A549 (cell line): ENCODE measurements at regions of chr21 and their contacts with region 1.

Region 1: DNA sequence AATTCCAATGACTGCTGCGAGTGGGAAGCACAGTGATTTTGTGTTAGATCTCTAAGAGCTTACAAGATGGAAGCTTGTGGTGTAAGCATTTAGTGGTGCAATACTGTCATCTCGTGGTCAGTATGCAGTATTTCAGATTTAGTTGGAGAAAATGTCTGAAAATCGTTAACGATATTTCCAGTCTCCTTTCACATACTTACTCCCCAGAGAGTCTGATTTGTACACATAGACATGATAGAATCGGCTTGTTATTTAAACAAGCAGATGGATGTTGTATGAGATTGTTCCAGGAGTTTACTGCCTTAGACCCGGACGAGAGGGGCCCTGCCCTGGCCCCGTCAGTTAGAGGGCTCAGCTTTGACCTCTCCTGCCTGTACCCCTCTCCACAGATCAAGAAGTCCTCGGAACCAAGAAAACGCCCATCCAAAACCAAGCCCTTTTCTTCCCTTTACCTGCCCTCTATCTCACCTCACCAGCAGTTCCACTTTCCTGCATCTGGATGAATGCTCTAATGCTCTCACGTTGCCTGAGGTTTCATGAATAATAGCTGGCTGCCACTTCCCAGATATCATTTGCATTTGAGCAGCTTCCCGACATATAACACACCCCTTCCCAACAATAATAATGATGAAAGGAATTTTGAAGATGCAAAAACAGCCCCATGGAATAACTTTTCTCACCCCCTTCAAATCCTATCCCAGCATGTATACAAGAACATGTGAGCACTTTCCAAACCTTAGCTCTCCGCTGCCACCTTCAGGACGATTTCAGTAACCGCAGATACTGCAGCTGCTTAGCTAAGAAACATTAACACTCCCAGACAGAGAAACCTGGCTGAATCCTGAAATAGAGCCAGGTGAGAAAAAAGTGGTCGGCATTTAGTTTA is 247.3 kb downstream of the LTN1 start:
- DNase-seq: peak; percentile 10 to 81
- ATAC-seq: peak; percentile 95 to 97
- H3K4me3 ChIP-seq: peak overlapping the region; percentile 33; the same call in 2 of the 3 replicates
- H3K27ac ChIP-seq: 0 out of 6 replicates have a peak overlapping the region, but pooled peaks of 1 of the 2 experiments have one; percentile 37
- H3K4me1 ChIP-seq: no peaks in the 10 kb centered on the region
- CTCF ChIP-seq: peak; percentile 74
- EP300 ChIP-seq: no peak
- POLR2A ChIP-seq: no peak
- RAD21 ChIP-seq: peak; percentile 81 to 88

Region 2: GRCh38 chr21:26845066-26845758 is 1900.2 kb before region 1 on chr21 and contains the start of gene ADAMTS1:
- CTCF ChIA-PET with region 1: interaction called, 17 read pairs
- POLR2A ChIA-PET with region 1: interaction called, 3 read pairs
- DNase-seq: peak in 1 of 2 experiments; percentile 38
- ATAC-seq: peak; percentile 54 to 72
- H3K4me3 ChIP-seq: peak within 1 kb of the TSS; percentile 42
- H3K27ac ChIP-seq: 0 out of 6 replicates have a peak within 1 kb of the TSS, but pooled peaks of 1 of the 2 experiments have one; percentile 49
- H3K4me1 ChIP-seq: peaks cover 9% of the 10 kb centered on the region; the same call in 2 of the 3 replicates
- CTCF ChIP-seq: no peak
- EP300 ChIP-seq: no peak
- POLR2A ChIP-seq: no peak
- RAD21 ChIP-seq: no peak
- polyA plus RNA-seq, gene ADAMTS1: 0.17 and 0.24 TPM in 2 replicates

Region 3: GRCh38 chr21:28336314-28336713 is 409.1 kb before region 1 on chr21:
- CTCF ChIA-PET with region 1: interaction called, 11 read pairs
- POLR2A ChIA-PET with region 1: no interaction called
- DNase-seq: peak in 1 of 2 experiments; percentile 11
- ATAC-seq: no peak
- H3K4me3 ChIP-seq: no peak overlapping the region
- H3K27ac ChIP-seq: no peak overlapping the region
- H3K4me1 ChIP-seq: no peaks in the 10 kb centered on the region
- CTCF ChIP-seq: no peak
- EP300 ChIP-seq: no peak
- POLR2A ChIP-seq: no peak
- RAD21 ChIP-seq: no peak

Region 4: GRCh38 chr21:28459193-28459592 is 286.2 kb before region 1 on chr21:
- CTCF ChIA-PET with region 1: no interaction called
- POLR2A ChIA-PET with region 1: no interaction called
- DNase-seq: no peak
- ATAC-seq: no peak
- H3K4me3 ChIP-seq: no peak overlapping the region
- H3K27ac ChIP-seq: no peak overlapping the region
- H3K4me1 ChIP-seq: no peaks in the 10 kb centered on the region
- CTCF ChIP-seq: no peak
- EP300 ChIP-seq: no peak
- POLR2A ChIP-seq: no peak
- RAD21 ChIP-seq: no peak

Region 5: DNA sequence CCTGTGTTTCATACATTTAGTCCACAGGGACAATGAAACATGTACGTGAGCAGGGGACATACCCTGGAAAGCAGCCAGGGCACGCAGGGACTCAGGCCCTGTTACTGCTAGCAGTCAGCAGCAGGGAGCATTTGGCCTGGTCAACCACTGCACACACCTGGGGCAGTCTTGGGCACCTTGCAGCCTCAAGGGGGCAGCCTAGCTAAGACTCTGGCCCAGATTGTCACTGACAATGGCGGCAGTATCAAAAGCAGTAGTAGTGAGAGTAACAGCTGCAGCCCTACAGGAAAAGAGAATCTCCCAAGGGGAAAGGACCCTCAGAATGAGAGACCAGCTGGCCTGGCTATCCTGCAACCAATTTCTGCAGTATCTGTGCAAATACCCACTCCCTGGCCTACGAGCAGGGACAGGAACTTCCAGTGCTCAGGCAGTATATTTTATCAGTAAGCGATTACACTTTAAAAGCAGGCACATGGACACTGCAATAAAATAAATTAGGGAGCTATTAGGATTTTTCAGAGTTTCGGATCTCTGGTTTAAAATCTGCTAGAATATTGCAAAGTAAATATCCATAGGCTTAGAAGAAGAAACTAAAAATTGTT is 228.3 kb before region 1 on chr21:
- CTCF ChIA-PET with region 1: interaction called, 23 read pairs
- POLR2A ChIA-PET with region 1: interaction called, 3 read pairs
- DNase-seq: peak; percentile 2 to 59
- ATAC-seq: peak; percentile 88 to 95
- H3K4me3 ChIP-seq: no peak overlapping the region
- H3K27ac ChIP-seq: no peak overlapping the region
- H3K4me1 ChIP-seq: no peaks in the 10 kb centered on the region
- CTCF ChIP-seq: peak; percentile 30; the same call in 2 of the 3 replicates
- EP300 ChIP-seq: no peak
- POLR2A ChIP-seq: no peak
- RAD21 ChIP-seq: peak; percentile 17 to 32; a peak in 1 of 5 replicates

Region 6: DNA sequence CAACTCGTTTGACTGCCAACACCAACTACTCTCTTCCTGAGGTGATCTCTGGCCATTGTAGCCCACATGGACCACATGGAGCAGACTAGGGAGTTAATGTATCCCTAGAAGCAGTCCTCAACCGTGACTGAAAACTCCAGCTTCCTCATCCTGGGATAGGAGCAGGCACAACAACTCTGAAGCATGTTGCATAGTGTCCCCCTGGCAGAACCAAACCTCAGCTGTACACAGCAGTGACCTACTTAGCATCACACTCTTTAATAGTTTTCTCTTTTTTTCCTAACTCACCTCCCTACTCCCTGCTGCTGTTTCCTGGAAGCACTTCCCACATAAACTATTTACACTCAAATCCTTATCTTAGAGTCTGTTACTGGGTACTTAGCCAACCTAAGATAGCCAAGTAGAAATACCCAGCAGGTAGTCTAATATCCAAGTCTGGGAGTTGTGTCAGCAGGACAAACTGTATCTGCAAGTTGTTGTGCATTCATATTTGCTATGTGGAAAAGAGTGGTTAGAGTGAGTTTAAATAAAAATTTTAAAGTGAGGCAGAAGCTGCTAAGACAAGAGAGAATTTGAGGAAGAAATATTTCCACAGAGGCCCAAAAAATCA is 18.5 kb after region 1 on chr21:
- CTCF ChIA-PET with region 1: interaction called, 10 read pairs
- POLR2A ChIA-PET with region 1: no interaction called
- DNase-seq: no peak
- ATAC-seq: no peak
- H3K4me3 ChIP-seq: no peak overlapping the region
- H3K27ac ChIP-seq: no peak overlapping the region
- H3K4me1 ChIP-seq: no peaks in the 10 kb centered on the region
- CTCF ChIP-seq: no peak
- EP300 ChIP-seq: no peak
- POLR2A ChIP-seq: no peak
- RAD21 ChIP-seq: no peak

Region 7: DNA sequence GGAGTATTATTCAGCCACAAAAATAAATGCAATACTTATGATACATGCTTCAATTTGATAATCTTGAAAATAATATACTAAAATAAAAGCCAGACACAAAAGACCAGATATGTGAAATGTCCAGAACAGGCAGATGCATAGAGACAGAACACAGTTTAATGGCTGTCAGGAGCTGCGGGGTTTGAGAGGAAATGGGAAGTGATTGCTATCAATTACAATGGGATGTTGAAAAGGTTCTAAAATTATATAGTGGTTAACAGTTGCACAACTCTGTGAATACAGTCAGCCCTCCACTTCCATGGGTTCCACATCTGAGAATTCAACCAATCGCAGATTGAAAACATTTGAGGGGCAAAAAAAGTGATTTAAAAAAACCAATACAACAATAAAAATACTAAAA is 193.4 kb after region 1 on chr21:
- CTCF ChIA-PET with region 1: interaction called, 14 read pairs
- POLR2A ChIA-PET with region 1: no interaction called
- DNase-seq: no peak
- ATAC-seq: no peak
- H3K4me3 ChIP-seq: no peak overlapping the region
- H3K27ac ChIP-seq: no peak overlapping the region
- H3K4me1 ChIP-seq: 0 out of 3 replicates have a peak, but pooled peaks cover 3% of the 10 kb centered on the region
- CTCF ChIP-seq: no peak
- EP300 ChIP-seq: no peak
- POLR2A ChIP-seq: no peak
- RAD21 ChIP-seq: no peak